CD8-positive, alpha-beta memory T cell (primary cell): ENCODE measurements at regions of chr1 and their contacts with region 1.

Region 1: DNA sequence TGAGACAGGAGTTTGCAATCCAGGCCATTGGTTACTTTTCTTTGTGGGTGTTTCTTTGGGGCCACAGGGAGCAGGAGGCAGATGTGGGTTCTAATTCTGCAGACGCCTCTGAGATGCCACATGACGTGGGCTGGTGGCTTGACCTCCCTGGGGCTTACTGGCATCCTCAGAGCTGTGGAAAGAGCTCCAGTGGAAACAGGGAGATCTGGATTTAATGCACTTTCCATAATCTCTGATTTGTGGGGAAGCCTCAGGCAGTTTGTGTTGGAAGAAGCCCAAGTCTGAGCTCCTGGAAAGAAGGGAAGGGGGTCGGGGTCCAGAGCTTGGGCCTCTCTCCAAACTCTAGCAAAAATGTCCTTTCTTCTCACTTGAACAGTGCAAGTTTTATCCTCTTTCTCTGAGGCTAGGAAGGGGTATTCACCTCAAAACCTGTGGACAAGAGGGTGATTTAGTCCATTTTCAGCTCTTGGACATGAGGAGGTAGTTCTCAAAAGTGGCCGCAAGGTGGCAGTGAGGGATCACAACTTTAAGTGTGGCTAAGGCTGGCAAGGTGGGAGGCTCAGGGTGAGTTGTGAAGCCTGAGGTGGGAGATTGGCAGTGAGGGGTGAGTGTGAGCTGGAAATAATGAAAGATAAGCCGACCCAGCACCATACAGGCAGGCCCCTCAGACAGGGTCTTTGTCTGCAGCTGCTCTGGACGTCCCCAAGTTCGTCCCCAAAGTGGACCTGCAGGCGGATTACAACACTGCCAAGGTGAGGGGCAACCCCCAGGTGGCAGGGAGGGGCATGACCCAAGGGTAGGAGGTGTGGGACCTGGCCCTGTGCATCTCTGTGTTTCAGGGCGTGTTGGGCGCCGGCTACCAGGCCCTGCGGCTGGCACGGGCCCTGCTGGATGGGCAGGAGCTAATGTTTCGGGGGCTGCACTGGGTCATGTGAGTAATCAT is 9.2 kb downstream of the IKBKE start:
- DNase-seq: peak; percentile 45 to 77 (median 52)
- H3K4me3 ChIP-seq: no peak overlapping the region
- H3K4me3 Mint-ChIP-seq: no peak overlapping the region
- H3K27ac ChIP-seq: no peak overlapping the region
- H3K27ac Mint-ChIP-seq: peak overlapping the region in 6 of 8 donors; percentile 8 to 72 (median 40)
- H3K4me1 ChIP-seq: no peaks in the 10 kb centered on the region
- H3K4me1 Mint-ChIP-seq: peaks cover 7 to 22% (median 10%) of the 10 kb centered on the region in 3 donors
- H3K27me3 ChIP-seq: no peaks in the 10 kb centered on the region
- H3K27me3 Mint-ChIP-seq: no peaks in the 10 kb centered on the region

Region 2: GRCh38 chr1:206461602-206462455 is 17.6 kb before region 1 on chr1:
- CTCF ChIA-PET with region 1: interaction called, 95 read pairs
- POLR2A ChIA-PET with region 1: no interaction called
- DNase-seq: peak; percentile 47 to 77 (median 55)
- H3K4me3 ChIP-seq: no peak overlapping the region
- H3K4me3 Mint-ChIP-seq: no peak overlapping the region
- H3K27ac ChIP-seq: no peak overlapping the region
- H3K27ac Mint-ChIP-seq: peak overlapping the region in 3 of 8 donors; percentile 49 to 87 (median 67)
- H3K4me1 ChIP-seq: peaks cover 32% of the 10 kb centered on the region
- H3K4me1 Mint-ChIP-seq: peaks cover 12 to 28% (median 25%) of the 10 kb centered on the region in 3 donors
- H3K27me3 ChIP-seq: no peaks in the 10 kb centered on the region
- H3K27me3 Mint-ChIP-seq: no peaks in the 10 kb centered on the region

Region 3: GRCh38 chr1:206489980-206490770 is 10.7 kb after region 1 on chr1:
- CTCF ChIA-PET with region 1: interaction called, 27 read pairs
- POLR2A ChIA-PET with region 1: no interaction called
- DNase-seq: peak; percentile 45 to 71 (median 51)
- H3K4me3 ChIP-seq: no peak overlapping the region
- H3K4me3 Mint-ChIP-seq: no peak overlapping the region
- H3K27ac ChIP-seq: peak overlapping the region; percentile 27
- H3K27ac Mint-ChIP-seq: peak overlapping the region in 3 of 8 donors; percentile 23 to 60 (median 51)
- H3K4me1 ChIP-seq: no peaks in the 10 kb centered on the region
- H3K4me1 Mint-ChIP-seq: no peaks in the 10 kb centered on the region
- H3K27me3 ChIP-seq: no peaks in the 10 kb centered on the region
- H3K27me3 Mint-ChIP-seq: no peaks in the 10 kb centered on the region

Region 4: DNA sequence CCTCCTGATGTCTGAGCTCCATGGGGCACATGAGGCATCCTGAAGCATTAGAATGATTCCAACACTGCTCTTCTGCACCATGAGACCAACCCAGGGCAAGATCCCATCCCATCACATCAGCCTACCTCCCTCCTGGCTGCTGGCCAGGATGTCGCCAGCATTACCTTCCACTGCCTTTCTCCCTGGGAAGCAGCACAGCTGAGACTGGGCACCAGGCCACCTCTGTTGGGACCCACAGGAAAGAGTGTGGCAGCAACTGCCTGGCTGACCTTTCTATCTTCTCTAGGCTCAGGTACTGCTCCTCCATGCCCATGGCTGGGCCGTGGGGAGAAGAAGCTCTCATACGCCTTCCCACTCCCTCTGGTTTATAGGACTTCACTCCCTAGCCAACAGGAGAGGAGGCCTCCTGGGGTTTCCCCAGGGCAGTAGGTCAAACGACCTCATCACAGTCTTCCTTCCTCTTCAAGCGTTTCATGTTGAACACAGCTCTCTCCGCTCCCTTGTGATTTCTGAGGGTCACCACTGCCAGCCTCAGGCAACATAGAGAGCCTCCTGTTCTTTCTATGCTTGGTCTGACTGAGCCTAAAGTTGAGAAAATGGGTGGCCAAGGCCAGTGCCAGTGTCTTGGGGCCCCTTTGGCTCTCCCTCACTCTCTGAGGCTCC is 16.8 kb after region 1 on chr1:
- CTCF ChIA-PET with region 1: interaction called, 27 read pairs
- POLR2A ChIA-PET with region 1: no interaction called
- DNase-seq: no peak
- H3K4me3 ChIP-seq: no peak overlapping the region
- H3K4me3 Mint-ChIP-seq: no peak overlapping the region
- H3K27ac ChIP-seq: no peak overlapping the region
- H3K27ac Mint-ChIP-seq: peak overlapping the region in 7 of 8 donors; percentile 33 to 82 (median 51)
- H3K4me1 ChIP-seq: no peaks in the 10 kb centered on the region
- H3K4me1 Mint-ChIP-seq: peaks cover 0 to 3% (median 0%) of the 10 kb centered on the region in 3 donors
- H3K27me3 ChIP-seq: no peaks in the 10 kb centered on the region
- H3K27me3 Mint-ChIP-seq: no peaks in the 10 kb centered on the region

Region 5: GRCh38 chr1:206583707-206584648 is 104.5 kb after region 1 on chr1:
- CTCF ChIA-PET with region 1: interaction called, 12 read pairs
- POLR2A ChIA-PET with region 1: no interaction called
- DNase-seq: peak; percentile 76 to 86 (median 80)
- H3K4me3 ChIP-seq: peak overlapping the region; percentile 22
- H3K4me3 Mint-ChIP-seq: peak overlapping the region; percentile 59 to 92 (median 88)
- H3K27ac ChIP-seq: peak overlapping the region; percentile 78
- H3K27ac Mint-ChIP-seq: peak overlapping the region; percentile 92 to 100 (median 98)
- H3K4me1 ChIP-seq: peaks cover 51% of the 10 kb centered on the region
- H3K4me1 Mint-ChIP-seq: peaks cover 58 to 84% (median 72%) of the 10 kb centered on the region in 3 donors
- H3K27me3 ChIP-seq: no peaks in the 10 kb centered on the region
- H3K27me3 Mint-ChIP-seq: peaks cover 0 to 1% of the 10 kb centered on the region in 2 donors

Region 6: DNA sequence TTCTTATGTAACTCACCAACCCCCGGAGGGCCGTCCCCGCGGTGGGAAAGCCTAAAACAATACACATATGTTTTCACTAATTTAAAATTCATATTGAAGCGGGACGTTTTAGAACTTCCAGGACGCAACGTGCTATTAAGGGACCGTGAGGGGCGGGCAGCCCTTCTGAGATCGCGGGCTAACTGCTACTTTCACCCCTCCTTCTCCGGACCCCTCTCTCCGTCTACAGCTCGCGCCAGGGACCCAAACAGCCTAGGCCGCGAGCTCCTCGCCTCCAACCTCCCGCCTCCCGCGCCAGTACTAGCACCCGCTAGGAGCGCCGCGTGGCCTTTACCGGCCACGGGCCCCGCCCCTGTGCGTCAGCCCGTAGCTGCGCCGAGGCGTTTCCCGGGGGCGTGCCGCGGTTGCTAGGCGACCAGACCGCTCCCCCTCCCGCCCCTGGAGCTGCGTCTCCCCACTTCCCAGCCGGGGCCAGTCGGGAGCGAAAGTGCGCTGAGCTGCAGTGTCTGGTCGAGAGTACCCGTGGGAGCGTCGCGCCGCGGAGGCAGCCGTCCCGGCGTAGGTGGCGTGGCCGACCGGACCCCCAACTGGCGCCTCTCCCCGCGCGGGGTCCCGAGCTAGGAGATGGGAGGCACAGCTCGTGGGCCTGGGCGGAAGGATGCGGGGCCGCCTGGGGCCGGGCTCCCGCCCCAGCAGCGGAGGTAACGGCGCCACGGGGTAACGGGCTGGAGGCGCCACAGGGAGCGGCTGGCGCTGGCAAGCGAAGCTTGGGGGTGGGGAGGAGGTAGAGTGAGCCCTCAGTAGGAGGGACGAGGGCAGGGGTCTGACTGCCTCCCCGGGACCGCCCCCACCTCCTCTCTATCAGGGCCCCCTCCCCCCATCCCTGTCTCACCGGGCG is 155.9 kb after region 1 on chr1 and contains the start of gene DYRK3:
- CTCF ChIA-PET with region 1: interaction called, 13 read pairs
- POLR2A ChIA-PET with region 1: interaction called, 3 read pairs
- DNase-seq: peak; percentile 84 to 94 (median 87)
- H3K4me3 ChIP-seq: peak within 1 kb of the TSS; percentile 62
- H3K4me3 Mint-ChIP-seq: peak within 1 kb of the TSS; percentile 85 to 96 (median 89)
- H3K27ac ChIP-seq: peak within 1 kb of the TSS; percentile 59
- H3K27ac Mint-ChIP-seq: peak within 1 kb of the TSS; percentile 61 to 95 (median 90)
- H3K4me1 ChIP-seq: peaks cover 13% of the 10 kb centered on the region
- H3K4me1 Mint-ChIP-seq: peaks cover 13 to 27% (median 18%) of the 10 kb centered on the region in 3 donors
- H3K27me3 ChIP-seq: no peaks in the 10 kb centered on the region
- H3K27me3 Mint-ChIP-seq: peaks cover 10 to 13% of the 10 kb centered on the region in 2 donors
- total RNA-seq, gene DYRK3: 11.0 to 11.7 TPM